ENCODE measurements at regions of chr3 and their contacts with region 1.

Region 1: GRCh38 chr3:194344012-194344411 is 7.1 kb downstream of the CPN2 start:
- DNase-seq: no peak
- H3K4me3 ChIP-seq: no peak overlapping the region
- CTCF ChIP-seq: peak; percentile 92

Region 2: DNA sequence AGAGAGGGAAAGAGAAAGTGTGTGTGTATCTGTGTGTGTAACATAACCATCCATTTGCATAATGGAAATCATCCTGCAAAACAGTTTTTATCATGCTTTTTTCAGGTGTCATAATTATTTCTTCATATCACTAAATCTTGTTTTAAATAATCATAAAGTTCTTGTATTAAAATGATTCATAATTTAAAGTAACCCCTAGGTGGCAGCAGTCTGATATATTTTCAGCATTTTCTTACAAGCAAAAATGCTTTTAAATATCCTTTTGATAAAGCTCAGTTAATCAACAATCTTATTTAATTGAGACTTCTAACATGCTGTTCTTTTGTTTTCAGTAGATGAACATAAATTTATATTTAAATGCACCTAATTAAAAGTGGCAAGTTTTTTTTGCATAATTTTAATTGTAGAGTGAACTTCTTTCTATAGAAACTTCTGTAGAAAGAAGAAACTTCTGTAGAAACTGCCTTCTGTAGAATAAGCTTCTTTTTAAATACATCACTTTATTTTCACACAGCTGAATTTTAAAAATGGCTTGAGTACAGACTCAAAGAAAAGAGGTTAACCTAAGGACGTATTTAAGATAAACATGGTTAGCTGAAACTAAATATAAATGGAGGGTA is 678.5 kb before region 1 on chr3:
- CTCF ChIA-PET with region 1: interaction called, 14 read pairs
- POLR2A ChIA-PET with region 1: no interaction called
- DNase-seq: no peak
- H3K4me3 ChIP-seq: no peak overlapping the region
- CTCF ChIP-seq: no peak

Region 3: GRCh38 chr3:194323785-194324735 is 20.0 kb before region 1 on chr3:
- CTCF ChIA-PET with region 1: interaction called, 18 read pairs
- POLR2A ChIA-PET with region 1: no interaction called
- DNase-seq: no peak
- H3K4me3 ChIP-seq: peak overlapping the region; percentile 37
- CTCF ChIP-seq: no peak

Region 4: GRCh38 chr3:194364652-194365434 is 20.8 kb after region 1 on chr3:
- CTCF ChIA-PET with region 1: interaction called, 274 read pairs
- POLR2A ChIA-PET with region 1: interaction called, 4 read pairs
- DNase-seq: peak; percentile 69
- H3K4me3 ChIP-seq: peak overlapping the region; percentile 20
- CTCF ChIP-seq: no peak

Region 5: DNA sequence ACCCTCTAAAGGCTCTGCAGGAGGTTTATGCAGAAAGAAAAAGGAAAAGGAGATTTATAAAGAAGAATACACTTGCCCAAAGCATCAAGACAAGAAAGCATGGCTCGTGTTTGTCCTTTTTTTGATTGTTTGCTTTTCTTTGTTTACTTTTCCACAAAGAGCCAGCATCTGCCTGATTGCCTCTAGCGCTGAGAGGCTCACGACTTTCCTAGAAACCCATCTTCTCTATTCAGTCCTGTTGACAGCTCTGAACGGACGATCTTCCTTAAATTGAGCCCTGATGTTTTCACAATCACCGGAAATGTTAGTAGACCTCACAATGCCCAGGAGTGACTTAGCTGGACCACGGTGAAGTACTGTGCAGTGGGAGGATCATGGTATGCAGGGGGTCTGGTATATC is 42.6 kb after region 1 on chr3:
- CTCF ChIA-PET with region 1: interaction called, 22 read pairs
- POLR2A ChIA-PET with region 1: no interaction called
- DNase-seq: no peak
- H3K4me3 ChIP-seq: no peak overlapping the region
- CTCF ChIP-seq: no peak

Region 6: DNA sequence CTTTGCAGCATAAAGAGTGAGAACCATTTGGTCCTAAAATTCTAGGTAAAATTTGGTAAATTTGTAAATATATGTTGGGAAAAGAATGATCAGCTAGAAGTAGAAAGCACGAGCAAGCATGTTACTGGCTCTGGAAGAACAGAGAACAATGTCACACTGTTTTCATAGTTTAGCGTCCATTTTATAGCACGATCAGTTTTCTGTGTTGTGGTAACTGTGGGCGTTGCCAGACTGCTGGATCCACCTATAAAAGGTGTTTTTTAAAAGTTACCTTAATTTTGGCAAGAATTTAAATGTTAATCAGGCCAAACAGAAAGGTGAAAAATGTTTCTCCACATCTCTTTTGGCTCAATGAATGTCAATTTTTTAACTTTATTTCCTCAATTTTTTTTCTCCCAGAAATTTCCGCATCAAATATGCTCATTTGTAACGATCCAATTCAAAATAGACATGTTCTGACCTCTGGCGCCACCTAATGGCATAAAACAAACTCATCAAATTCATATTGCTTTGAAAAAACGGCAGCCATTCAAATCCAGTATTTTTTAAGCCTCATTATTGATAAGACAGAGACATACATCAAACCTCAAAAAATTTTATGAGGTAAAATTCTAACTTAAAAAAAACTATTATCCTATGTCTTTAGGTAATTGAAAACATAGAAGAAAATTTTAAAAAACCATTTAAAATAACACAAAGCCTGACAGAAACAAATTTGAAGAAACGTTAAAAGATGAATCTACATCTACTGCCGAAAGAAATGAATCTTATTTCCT is 60.5 kb after region 1 on chr3:
- CTCF ChIA-PET with region 1: interaction called, 220 read pairs
- POLR2A ChIA-PET with region 1: no interaction called
- DNase-seq: no peak
- H3K4me3 ChIP-seq: no peak overlapping the region
- CTCF ChIP-seq: peak; percentile 42

Measured in AG04449 (cell line).